Posterior vena cava (tissue), 2 donors: ENCODE measurements at regions of chr9 and their contacts with region 1.

Region 1: DNA sequence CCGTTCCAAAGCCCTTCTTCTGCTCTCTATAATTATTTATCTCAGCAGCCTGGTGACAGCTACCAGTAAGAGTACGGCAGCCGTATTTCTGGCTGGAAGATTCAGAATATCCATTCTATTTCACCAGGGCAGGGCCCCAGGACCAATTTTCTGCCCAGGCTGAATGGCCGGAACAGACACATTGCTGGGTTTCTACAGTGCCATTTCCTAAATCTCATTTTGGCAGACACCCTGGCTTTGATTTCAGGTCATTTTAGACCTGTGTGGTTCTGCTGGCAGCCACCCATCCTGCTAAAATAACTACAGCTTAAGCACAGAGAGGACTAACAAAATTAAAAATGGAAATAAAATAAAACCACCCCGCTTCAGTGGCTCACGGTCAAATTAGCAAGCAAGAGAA is 95.0 kb downstream of the CRB2 start:
- DNase-seq: no peak

Region 2: DNA sequence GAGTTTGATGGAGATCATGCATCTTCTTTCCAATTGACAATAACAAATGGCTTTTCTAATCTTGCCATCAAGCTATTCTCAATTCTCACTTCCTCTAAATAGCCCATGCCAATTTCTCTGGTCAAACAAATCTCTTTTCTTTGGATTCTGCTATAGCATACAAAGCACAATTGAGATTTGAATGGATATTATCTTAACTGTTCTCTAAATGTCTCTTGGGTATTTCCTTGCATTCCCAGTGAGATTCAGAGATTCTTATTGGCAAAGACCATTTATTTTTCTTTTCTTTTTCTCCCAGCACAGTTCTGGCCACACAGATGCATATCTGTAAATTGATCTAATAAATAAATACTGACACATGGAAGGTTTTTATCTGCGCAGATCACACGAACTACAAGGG is 898.2 kb before region 1 on chr9 and contains the start of gene OR1N2:
- intact Hi-C with region 1: no loop called
- DNase-seq: no peak
- total RNA-seq, gene OR1N2: not detected

Region 3: DNA sequence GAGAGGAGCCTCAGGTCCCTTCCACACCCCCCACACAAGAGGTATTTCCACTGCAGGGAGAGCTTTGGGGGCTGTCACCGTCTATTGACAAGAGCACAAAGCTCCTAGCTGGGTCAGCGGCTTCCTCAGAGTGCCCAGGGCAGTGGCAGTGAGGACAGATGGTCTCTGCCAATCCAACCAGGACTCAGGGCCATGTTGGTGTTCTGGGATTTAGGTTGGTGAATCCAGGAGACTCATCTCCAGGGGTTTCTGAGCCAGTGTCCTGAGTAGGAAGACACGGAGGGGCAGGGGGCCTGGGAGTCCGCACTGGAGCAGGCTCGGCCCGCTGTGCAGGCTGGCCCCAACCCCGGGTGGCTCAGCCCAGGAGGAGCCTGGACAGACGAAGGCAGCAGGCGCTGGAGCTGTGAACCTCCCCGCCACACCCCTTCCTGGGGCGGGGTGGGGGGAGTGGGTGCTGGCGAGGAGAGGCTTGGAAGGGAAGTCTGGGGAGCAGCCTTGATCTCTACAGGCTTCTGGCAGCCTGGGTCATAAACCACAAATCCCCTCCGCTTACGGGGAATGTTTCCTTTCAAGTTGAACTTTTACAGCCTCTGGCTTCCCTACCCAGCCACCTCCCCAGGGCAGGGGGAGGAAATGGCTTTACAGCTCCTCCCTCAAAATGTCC is 75.4 kb before region 1 on chr9:
- intact Hi-C with region 1: no loop called
- DNase-seq: no peak

Region 4: DNA sequence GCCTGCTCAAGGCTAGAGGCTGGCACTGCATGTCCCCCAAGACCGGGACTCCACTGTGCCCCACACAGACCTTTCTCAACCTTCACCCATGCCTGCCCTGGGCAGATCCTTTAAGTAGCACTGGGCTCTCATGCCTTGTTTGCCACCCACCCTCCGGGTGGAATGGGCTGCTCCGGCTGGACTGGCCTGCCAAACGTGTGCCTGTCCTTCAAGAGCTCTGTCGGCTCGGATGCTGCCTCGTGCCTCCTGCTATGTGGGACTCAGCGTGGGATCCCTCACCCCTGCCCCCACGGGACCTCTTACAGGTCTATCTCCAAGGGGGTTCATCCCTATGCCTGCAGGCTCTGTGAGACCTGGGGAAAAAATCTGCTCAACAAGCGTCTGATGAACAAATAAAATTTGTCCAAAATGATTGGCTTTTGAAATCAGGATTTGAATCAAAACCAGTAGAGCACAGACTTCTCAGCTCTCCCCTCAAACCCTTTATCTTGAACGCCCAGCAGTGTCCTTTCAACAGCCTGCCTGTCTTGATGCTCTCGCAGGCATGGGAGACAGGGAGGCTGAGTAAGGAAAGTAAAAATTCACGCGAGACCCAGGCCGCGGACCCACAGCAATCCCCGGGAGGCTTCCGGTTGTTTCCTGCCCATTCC is 38.7 kb before region 1 on chr9:
- intact Hi-C with region 1: loop called in 1 of 2 experiments (anchors 1 kb)
- DNase-seq: peak; percentile 70

Region 5: DNA sequence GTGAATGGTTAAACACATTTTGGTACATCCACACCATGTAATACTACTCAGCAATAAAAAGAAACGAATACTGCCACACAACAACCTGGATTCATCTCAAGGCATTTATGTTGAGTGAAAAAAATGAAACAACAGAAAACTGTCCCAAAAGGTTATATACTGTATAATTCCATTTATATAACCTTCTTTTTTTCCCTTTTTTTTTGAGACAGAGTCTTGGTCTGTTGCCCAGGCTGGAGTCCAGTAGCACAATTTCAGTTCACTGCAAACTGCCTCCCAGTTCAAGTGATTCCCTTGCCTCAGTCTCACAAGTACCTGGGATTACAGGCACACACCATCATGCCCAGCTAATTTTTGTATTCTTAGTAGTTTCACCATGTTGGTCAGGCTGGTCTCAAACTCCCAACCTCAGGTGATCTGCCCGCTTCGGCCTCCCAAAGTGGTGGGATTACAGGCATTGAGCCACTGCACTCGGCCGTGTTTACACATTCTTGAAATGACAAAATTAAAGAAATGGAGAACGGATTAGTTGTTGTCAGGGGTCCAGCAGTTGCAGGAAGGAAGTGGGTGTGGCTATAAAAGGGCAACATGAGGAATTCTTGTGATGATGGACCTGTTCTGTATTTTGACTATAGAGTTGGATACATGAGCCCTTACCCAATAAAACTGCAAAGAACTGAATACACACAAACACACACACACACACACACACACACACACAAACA is 1721.2 kb after region 1 on chr9:
- intact Hi-C with region 1: no loop called
- DNase-seq: no peak